ENCODE measurements at regions of chr1 and their contacts with region 1.

Region 1: GRCh38 chr1:184664042-184664655 is 90.5 kb downstream of the EDEM3 start:
- DNase-seq: peak; percentile 75 to 86
- ATAC-seq: peak; percentile 92 to 96 (median 95)
- H3K4me3 ChIP-seq: peak overlapping the region in 9 of 10 donors; percentile 23 to 59 (median 45)
- H3K27ac ChIP-seq: peak overlapping the region in 4 of 10 donors; percentile 26 to 54 (median 38)
- H3K4me1 ChIP-seq: peaks cover 0 to 14% (median 13%) of the 10 kb centered on the region in 9 donors
- H3K27me3 ChIP-seq: no peaks in the 10 kb centered on the region
- CTCF ChIP-seq: peak; percentile 85 to 99 (median 95)

Region 2: DNA sequence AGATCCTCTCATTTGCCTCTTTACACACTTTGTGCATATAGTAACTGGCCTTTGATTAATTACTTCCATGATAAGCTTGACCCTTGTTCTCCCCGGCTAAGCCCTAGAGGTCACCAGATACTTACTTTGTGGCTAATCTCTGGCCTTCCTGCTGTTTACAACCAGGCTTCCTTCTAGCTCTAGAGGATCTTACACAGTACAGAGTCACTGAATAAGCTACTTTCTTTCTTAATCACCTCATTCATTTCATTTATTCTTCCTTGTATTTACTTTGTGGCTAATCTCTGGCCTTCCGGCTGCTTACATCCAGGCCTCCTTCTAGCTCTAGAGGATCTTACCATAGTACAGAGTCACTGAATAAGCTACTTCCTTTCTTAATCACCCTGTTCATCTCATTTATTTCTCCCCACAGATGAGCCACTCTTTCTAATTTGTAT is 421.6 kb before region 1 on chr1:
- intact Hi-C with region 1: loop called in 8 of 10 experiments (anchors 2 to 10 kb)
- DNase-seq: peak in 1 of 2 donors; percentile 27
- ATAC-seq: peak; percentile 75 to 95 (median 92)
- H3K4me3 ChIP-seq: no peak overlapping the region
- H3K27ac ChIP-seq: peak overlapping the region in 4 of 10 donors; percentile 6 to 53 (median 45)
- H3K4me1 ChIP-seq: peaks cover 0 to 19% (median 10%) of the 10 kb centered on the region in 9 donors
- H3K27me3 ChIP-seq: no peaks in the 10 kb centered on the region
- CTCF ChIP-seq: peak; percentile 10 to 71 (median 43)

Region 3: GRCh38 chr1:184386312-184387068 is 277.7 kb before region 1 on chr1 and contains the start of gene C1orf21:
- intact Hi-C with region 1: loop called in 7 of 10 experiments (anchors 5 to 10 kb)
- DNase-seq: peak; percentile 92
- ATAC-seq: peak; percentile 95 to 98 (median 96)
- H3K4me3 ChIP-seq: peak within 1 kb of the TSS; percentile 42 to 97 (median 86)
- H3K27ac ChIP-seq: peak within 1 kb of the TSS; percentile 77 to 95 (median 90)
- H3K4me1 ChIP-seq: peaks cover 0 to 43% (median 34%) of the 10 kb centered on the region in 9 donors
- H3K27me3 ChIP-seq: peaks cover 0 to 10% (median 0%) of the 10 kb centered on the region in 7 donors
- CTCF ChIP-seq: no peak
- total RNA-seq, gene C1orf21: 50.8 to 76.7 (median 69.3) TPM

Region 4: GRCh38 chr1:184563308-184563707 is 100.8 kb before region 1 on chr1:
- intact Hi-C with region 1: loop called in 6 of 10 experiments (anchors 5 to 10 kb)
- DNase-seq: no peak
- ATAC-seq: peak in 5 of 8 donors; percentile 56 to 66 (median 59)
- H3K4me3 ChIP-seq: no peak overlapping the region
- H3K27ac ChIP-seq: peak overlapping the region in 6 of 10 donors; percentile 37 to 74 (median 56)
- H3K4me1 ChIP-seq: peaks cover 8 to 38% (median 31%) of the 10 kb centered on the region in 9 donors
- H3K27me3 ChIP-seq: no peaks in the 10 kb centered on the region
- CTCF ChIP-seq: peak; percentile 23 to 78 (median 68)

Region 5: GRCh38 chr1:184622136-184622823 is 41.9 kb before region 1 on chr1:
- intact Hi-C with region 1: loop called in 2 of 10 experiments (anchors 5 to 10 kb)
- DNase-seq: peak; percentile 65 to 77
- ATAC-seq: peak; percentile 75 to 91 (median 84)
- H3K4me3 ChIP-seq: peak overlapping the region in 1 of 10 donors; percentile 4
- H3K27ac ChIP-seq: peak overlapping the region; percentile 41 to 94 (median 78)
- H3K4me1 ChIP-seq: peaks cover 14 to 72% (median 69%) of the 10 kb centered on the region in 9 donors
- H3K27me3 ChIP-seq: no peaks in the 10 kb centered on the region
- CTCF ChIP-seq: peak in 3 of 9 donors; percentile 8 to 32 (median 16)

Region 6: DNA sequence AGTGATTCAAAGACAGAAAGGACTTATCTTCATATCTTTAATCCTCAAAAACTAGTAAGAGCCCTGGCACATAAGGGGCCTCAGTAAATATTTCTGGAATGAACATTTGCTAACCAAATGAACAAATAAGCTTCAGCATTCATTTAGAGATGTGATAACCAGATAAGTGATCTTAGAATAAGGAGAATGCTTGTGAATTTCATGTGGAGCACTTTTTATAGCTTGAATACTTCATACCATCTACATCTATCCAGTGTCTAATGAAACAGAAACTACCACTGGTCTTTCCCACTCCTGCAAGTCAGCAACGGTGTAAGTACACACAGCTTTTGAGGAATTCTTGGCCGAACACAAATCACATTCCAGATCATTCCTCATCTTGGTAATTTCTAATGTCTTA is 52.0 kb after region 1 on chr1:
- intact Hi-C with region 1: no loop called
- DNase-seq: no peak
- ATAC-seq: no peak
- H3K4me3 ChIP-seq: no peak overlapping the region
- H3K27ac ChIP-seq: no peak overlapping the region
- H3K4me1 ChIP-seq: no peaks in the 10 kb centered on the region
- H3K27me3 ChIP-seq: no peaks in the 10 kb centered on the region
- CTCF ChIP-seq: no peak

Measured in heart right ventricle (tissue), 16 donors.